ENCODE measurements at regions of chr1 and their contacts with region 1.

Region 1: GRCh38 chr1:119743781-119744597 is 24.7 kb downstream of the HMGCS2 start:
- DNase-seq: peak; percentile 67
- H3K4me3 ChIP-seq: no peak overlapping the region
- H3K27ac ChIP-seq: no peak overlapping the region
- H3K27me3 ChIP-seq: no peaks in the 10 kb centered on the region
- CTCF ChIP-seq: peak; percentile 85

Region 2: DNA sequence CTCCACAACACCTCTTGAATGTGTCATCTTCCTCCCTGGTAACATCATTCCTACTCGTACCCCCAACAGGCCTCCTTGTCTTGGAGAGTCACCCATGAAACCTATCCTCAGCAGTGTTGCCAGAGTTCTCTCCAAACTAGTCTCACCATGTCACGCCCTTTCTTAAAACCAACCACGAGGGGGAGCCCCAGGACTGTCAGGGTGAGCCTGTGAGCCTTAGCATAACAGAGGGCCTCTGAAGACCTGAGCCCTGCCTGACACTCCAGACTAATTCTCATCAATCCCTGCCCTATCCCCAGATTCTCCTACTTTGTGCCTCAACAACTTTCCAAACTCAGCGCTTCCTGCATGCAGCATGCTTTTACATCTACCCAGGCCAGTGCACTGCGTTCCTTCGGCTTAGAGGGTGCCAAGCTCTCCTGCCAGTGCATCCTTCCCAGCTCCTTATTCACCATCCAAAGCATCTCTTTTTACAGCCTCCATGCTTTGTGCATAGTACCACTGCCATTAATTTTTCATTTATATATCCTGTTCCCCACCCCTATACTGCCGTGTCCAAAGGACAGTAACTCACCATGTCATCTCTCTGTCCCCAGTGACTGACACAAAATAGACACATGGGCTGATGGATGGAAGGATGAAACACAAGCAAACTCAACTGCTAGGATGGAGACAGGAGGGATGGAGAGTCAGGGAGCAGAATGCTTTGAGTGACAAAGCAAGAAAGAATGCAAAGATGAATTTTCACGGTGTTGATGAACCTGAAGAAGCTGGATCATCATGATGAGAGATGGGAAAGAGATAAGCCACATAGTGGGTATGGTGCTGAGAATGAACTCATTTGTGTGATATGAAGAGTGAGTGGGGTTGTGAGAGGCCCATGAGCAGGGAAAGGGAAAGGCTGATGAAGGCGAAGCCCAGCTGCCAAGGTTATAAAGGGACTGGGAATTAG is 129.9 kb before region 1 on chr1:
- CTCF ChIA-PET with region 1: interaction called, 12 read pairs
- POLR2A ChIA-PET with region 1: no interaction called
- DNase-seq: peak; percentile 75
- H3K4me3 ChIP-seq: no peak overlapping the region
- H3K27ac ChIP-seq: no peak overlapping the region
- H3K27me3 ChIP-seq: peaks cover 3% of the 10 kb centered on the region
- CTCF ChIP-seq: peak; percentile 84

Region 3: GRCh38 chr1:119656410-119656955 is 87.5 kb before region 1 on chr1:
- CTCF ChIA-PET with region 1: no interaction called
- POLR2A ChIA-PET with region 1: no interaction called
- DNase-seq: no peak
- H3K4me3 ChIP-seq: no peak overlapping the region
- H3K27ac ChIP-seq: no peak overlapping the region
- H3K27me3 ChIP-seq: peaks cover 4% of the 10 kb centered on the region
- CTCF ChIP-seq: no peak

Region 4: GRCh38 chr1:119732465-119733168 is 11.4 kb before region 1 on chr1:
- CTCF ChIA-PET with region 1: interaction called, 32 read pairs
- POLR2A ChIA-PET with region 1: no interaction called
- DNase-seq: no peak
- H3K4me3 ChIP-seq: no peak overlapping the region
- H3K27ac ChIP-seq: no peak overlapping the region
- H3K27me3 ChIP-seq: no peaks in the 10 kb centered on the region
- CTCF ChIP-seq: no peak

Region 5: GRCh38 chr1:119758584-119758983 is 14.6 kb after region 1 on chr1:
- CTCF ChIA-PET with region 1: interaction called, 36 read pairs
- POLR2A ChIA-PET with region 1: no interaction called
- DNase-seq: no peak
- H3K4me3 ChIP-seq: no peak overlapping the region
- H3K27ac ChIP-seq: no peak overlapping the region
- H3K27me3 ChIP-seq: peaks cover 6% of the 10 kb centered on the region
- CTCF ChIP-seq: no peak

Region 6: DNA sequence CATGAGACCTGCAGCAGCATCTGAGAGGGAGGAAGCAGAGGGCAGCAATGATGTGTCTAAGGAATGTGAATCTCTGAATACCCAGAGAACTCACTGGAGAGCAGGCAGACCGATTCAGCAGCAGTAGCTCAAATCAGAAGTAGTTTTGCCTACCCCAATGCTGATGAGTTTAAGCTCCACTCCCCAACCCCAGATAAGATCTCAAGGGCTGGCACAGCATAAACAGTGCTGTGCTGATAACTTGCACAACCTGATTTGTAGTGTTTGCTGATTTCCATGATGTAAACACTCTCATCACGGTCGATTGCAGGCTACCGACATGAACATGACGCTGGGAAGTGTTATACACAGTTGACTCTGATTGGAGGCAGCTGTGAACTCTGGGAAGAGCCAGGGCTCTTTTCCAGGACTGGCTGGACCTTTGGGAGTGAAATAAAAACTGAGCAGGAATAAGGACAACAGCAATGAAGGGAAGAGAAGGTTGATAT is 35.9 kb after region 1 on chr1:
- CTCF ChIA-PET with region 1: interaction called, 11 read pairs
- POLR2A ChIA-PET with region 1: no interaction called
- DNase-seq: no peak
- H3K4me3 ChIP-seq: peak overlapping the region; percentile 36
- H3K27ac ChIP-seq: peak overlapping the region; percentile 21
- H3K27me3 ChIP-seq: peaks cover 5% of the 10 kb centered on the region
- CTCF ChIP-seq: no peak

Region 7: GRCh38 chr1:119870917-119871596 is 127.1 kb after region 1 on chr1:
- CTCF ChIA-PET with region 1: interaction called, 22 read pairs
- POLR2A ChIA-PET with region 1: interaction called, 3 read pairs
- DNase-seq: peak; percentile 50
- H3K4me3 ChIP-seq: no peak overlapping the region
- H3K27ac ChIP-seq: no peak overlapping the region
- H3K27me3 ChIP-seq: no peaks in the 10 kb centered on the region
- CTCF ChIP-seq: peak; percentile 98

Region 8: DNA sequence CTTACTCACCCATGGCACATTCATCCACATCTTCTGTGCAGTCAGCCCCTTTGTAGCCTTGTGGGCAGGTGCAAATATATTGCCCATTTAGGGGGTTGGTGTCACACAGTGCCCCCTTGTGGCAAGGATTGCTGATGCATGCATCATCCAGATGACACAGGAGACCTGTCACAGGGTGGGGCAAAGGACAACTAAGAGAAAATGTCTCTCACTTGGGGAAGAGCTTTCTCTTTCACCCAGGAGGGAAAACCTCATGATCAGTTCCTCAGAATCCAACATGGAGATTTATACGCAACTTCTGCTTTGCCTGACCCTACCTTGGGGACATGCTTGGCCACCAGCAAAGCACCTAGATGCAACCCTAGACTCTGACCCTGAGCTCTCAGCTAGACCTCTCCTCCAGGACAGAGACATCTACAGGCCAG is 224.1 kb after region 1 on chr1:
- CTCF ChIA-PET with region 1: interaction called, 11 read pairs
- POLR2A ChIA-PET with region 1: no interaction called
- DNase-seq: no peak
- H3K4me3 ChIP-seq: no peak overlapping the region
- H3K27ac ChIP-seq: no peak overlapping the region
- H3K27me3 ChIP-seq: no peaks in the 10 kb centered on the region
- CTCF ChIP-seq: peak; percentile 64